ENCODE measurements at regions of chr5 and their contacts with region 1.

Region 1: DNA sequence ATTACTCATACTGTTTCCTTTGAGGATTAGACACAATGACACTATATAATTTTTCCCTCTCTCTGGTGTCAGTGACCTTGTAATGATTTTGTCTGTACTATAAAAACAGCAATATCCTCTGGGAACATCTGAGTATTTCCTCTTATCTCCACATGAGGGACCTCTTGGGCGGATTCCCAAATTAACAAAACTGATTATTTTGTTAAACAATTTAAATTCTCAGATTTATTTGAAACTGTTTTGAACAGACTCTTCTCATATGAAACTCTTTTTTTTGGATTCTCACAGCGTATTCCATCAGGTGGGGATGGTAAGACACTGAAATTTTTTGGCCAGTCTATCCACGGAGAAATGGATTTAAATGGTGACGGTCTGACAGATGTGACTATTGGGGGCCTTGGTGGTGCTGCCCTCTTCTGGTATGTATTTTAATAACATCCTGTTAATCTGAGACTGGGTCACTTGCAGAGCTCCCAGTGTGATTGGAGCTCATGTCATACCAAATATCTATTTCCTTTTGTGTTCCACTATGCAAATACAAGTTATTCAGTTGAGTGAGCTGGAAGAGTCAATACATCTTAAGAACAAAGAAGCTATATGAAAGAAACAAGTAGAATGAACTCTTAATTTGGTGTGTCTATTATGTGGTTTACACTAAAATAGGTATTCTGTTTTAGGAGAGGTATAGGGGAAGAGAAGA is 73.8 kb upstream of the ITGA2 start:
- DNase-seq: peak in 2 of 10 donors; percentile 17 to 32
- H3K4me3 ChIP-seq: peak overlapping the region in 54 of 59 donors; percentile 8 to 63 (median 40)
- H3K27ac ChIP-seq: peak overlapping the region in 19 of 59 donors; percentile 2 to 71 (median 46)
- H3K27me3 ChIP-seq: no peaks in the 10 kb centered on the region
- CTCF ChIP-seq: peak; percentile 64 to 95 (median 84)

Region 2: GRCh38 chr5:52560366-52560765 is 355.0 kb before region 1 on chr5:
- intact Hi-C with region 1: no loop called
- DNase-seq: no peak
- H3K4me3 ChIP-seq: no peak overlapping the region
- H3K27ac ChIP-seq: no peak overlapping the region
- H3K27me3 ChIP-seq: peaks cover 0 to 8% (median 0%) of the 10 kb centered on the region in 45 donors
- CTCF ChIP-seq: peak in 51 of 56 donors; percentile 11 to 68 (median 38)

Region 3: GRCh38 chr5:52787600-52788504 is 127.5 kb before region 1 on chr5 and contains the starts of genes ITGA1 and PELO:
- intact Hi-C with region 1: loop called in 1 of 2 experiments (anchors 5 kb)
- DNase-seq: peak in 9 of 10 donors; percentile 7 to 64 (median 26)
- H3K4me3 ChIP-seq: peak within 1 kb of the TSS; percentile 27 to 78 (median 61)
- H3K27ac ChIP-seq: peak within 1 kb of the TSS in 51 of 59 donors; percentile 2 to 90 (median 58)
- H3K27me3 ChIP-seq: peaks cover 0 to 48% (median 15%) of the 10 kb centered on the region in 45 donors
- CTCF ChIP-seq: peak in 46 of 56 donors; percentile 2 to 58 (median 36)
- total RNA-seq, gene ITGA1: 3.7 to 35.1 (median 13.0) TPM
- total RNA-seq, gene PELO: 11.6 to 28.0 (median 17.4) TPM

Region 4: GRCh38 chr5:52837068-52837467 is 78.3 kb before region 1 on chr5:
- intact Hi-C with region 1: loop called in 1 of 2 experiments (anchors 2 kb)
- DNase-seq: peak in 2 of 10 donors; percentile 23 to 48
- H3K4me3 ChIP-seq: peak overlapping the region in 21 of 59 donors; percentile 1 to 48 (median 18)
- H3K27ac ChIP-seq: peak overlapping the region in 33 of 59 donors; percentile 5 to 78 (median 49)
- H3K27me3 ChIP-seq: no peaks in the 10 kb centered on the region
- CTCF ChIP-seq: peak in 20 of 56 donors; percentile 8 to 44 (median 23)

Measured in dorsolateral prefrontal cortex (tissue), 120 donors.